ENCODE measurements at regions of chr14 and their contacts with region 1.

Region 1: DNA sequence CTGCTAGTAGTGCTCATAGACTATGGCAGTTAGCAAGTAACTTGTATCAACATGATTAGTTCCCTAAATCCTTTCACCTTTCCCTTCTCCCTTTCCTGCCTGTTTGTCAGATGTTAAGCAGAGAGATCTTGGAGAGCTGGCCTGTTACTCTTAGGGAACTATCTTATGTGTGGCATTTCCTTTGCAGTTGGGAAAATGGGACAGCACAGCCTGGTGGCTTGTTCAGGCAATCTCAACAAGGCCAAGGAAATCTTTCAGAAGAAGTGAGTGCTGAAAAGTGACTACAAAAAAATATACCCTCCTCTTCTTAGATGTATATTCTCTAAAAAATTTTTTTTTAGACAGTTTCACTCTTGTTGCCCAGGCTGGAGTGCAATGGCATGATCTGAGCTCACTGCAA is 7.4 kb downstream of the PARP2 start:
- DNase-seq: no peak
- H3K4me3 ChIP-seq: no peak overlapping the region
- H3K27ac ChIP-seq: no peak overlapping the region
- H3K4me1 ChIP-seq: no peaks in the 10 kb centered on the region
- H3K27me3 ChIP-seq: no peaks in the 10 kb centered on the region
- CTCF ChIP-seq: no peak
- POLR2A ChIP-seq: no peak

Region 2: GRCh38 chr14:20278414-20278813 is 72.4 kb before region 1 on chr14:
- intact Hi-C with region 1: no loop called
- DNase-seq: no peak
- H3K4me3 ChIP-seq: no peak overlapping the region
- H3K27ac ChIP-seq: no peak overlapping the region
- H3K4me1 ChIP-seq: no peaks in the 10 kb centered on the region
- H3K27me3 ChIP-seq: no peaks in the 10 kb centered on the region
- CTCF ChIP-seq: no peak
- POLR2A ChIP-seq: no peak

Region 3: DNA sequence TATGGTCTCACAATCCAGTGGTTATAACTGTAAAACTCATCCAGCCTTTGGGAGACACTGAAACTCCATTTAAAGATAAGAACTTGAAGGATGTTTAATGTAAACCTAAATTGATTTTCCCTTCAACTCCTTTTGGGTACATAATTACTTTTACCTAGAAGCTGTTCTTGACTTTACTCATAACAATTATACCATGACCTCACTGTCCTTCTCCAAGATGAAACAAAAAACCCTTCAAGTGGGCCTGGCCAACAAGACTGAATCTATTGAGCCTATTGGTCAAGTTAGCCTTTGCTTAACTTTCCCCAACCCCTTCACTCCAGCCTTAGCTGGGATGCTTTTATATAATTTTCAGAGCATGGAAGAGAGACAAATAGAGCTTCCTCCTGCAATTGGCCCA is 15.1 kb after region 1 on chr14:
- intact Hi-C with region 1: loop called (anchors 1 kb)
- DNase-seq: no peak
- H3K4me3 ChIP-seq: no peak overlapping the region
- H3K27ac ChIP-seq: no peak overlapping the region
- H3K4me1 ChIP-seq: no peaks in the 10 kb centered on the region
- H3K27me3 ChIP-seq: no peaks in the 10 kb centered on the region
- CTCF ChIP-seq: no peak
- POLR2A ChIP-seq: no peak